PC-9 (cell line): ENCODE measurements at regions of chr7 and their contacts with region 1.

Region 1: DNA sequence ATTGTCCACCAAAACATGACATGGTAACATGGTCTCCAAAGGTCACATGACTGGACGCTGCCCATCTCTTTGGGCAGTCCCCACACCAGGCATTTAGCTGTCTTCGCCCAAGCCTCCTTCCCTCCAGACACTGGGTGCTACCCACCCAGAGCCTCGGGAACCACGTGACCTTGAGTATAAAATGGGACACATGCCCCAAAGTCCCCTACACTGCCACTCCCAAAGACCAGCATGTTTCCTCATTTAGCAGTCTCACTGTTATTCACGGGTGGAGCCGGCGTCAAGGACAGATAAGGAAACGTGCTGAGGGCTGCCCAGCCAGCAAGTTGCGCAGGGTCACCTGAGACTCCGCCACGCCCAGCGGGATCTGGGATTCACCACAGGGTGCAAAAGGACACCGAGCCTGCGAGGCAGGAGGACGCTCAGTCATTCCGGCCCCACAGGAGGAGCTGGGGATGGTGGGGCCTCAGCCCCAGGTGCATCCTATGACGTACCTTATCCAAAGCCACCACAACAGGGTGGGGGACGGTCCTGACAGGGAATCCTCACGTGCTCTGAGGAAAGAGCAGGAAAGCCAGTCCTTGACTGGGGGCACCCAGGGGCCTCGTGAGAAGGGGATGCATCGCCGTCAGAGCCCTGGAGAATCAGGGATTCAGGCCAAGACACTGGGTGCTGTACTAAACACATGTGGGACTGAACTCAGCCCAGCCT is 226.9 kb downstream of the TNS3 start:
- DNase-seq: no peak
- H3K4me3 ChIP-seq: no peak overlapping the region
- H3K27ac ChIP-seq: no peak overlapping the region
- H3K4me1 ChIP-seq: no peaks in the 10 kb centered on the region
- H3K27me3 ChIP-seq: no peaks in the 10 kb centered on the region
- CTCF ChIP-seq: no peak

Region 2: DNA sequence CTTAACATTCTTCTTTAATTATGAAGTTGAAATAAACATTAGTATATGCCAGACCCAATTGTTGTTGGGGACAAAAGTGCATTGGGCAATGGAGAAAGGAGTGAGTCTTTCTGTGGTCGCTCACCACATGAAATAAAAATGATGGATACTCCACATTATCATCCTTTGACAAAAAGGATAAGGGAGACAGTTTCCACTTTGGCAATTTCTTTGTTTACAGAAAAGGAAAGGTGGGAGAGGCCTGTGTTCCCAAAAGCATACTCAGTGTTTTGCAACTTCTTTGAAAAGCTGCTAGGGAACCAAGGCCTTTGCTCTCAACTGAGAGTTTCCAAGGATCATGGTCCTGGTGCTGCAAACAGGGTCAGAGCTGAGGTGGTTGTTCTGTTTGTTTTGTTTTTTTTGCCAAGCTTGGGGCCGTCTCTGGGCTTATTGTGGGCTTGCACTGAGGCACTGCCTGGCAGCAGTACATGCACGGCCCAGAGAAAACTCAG is 115.0 kb before region 1 on chr7:
- CTCF ChIA-PET with region 1: no interaction called
- POLR2A ChIA-PET with region 1: no interaction called
- intact Hi-C with region 1: no loop called
- DNase-seq: no peak
- H3K4me3 ChIP-seq: no peak overlapping the region
- H3K27ac ChIP-seq: no peak overlapping the region
- H3K4me1 ChIP-seq: no peaks in the 10 kb centered on the region
- H3K27me3 ChIP-seq: no peaks in the 10 kb centered on the region
- CTCF ChIP-seq: no peak

Region 3: DNA sequence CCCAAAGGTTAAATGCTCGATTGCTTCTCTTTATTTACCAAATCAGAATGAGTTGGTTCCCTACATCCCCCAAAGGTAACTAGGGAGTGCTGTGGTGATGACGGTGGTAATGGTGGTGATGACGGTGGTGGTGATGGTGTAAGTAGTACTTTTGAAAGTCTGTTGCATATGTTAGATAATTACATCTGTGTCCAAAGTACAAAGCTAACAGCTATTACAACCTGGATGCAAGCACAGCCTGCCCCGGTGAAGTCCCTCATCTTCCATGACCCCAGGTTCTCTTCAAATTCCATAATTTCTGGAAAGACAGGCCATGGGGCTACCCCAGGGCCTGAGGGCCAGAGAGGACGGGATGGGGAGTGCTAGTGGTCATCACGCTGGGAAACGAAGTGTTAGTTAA is 111.9 kb after region 1 on chr7:
- CTCF ChIA-PET with region 1: no interaction called
- POLR2A ChIA-PET with region 1: interaction called, 13 read pairs
- intact Hi-C with region 1: no loop called
- DNase-seq: no peak
- H3K4me3 ChIP-seq: no peak overlapping the region
- H3K27ac ChIP-seq: no peak overlapping the region
- H3K4me1 ChIP-seq: no peaks in the 10 kb centered on the region
- H3K27me3 ChIP-seq: no peaks in the 10 kb centered on the region
- CTCF ChIP-seq: no peak

Region 4: DNA sequence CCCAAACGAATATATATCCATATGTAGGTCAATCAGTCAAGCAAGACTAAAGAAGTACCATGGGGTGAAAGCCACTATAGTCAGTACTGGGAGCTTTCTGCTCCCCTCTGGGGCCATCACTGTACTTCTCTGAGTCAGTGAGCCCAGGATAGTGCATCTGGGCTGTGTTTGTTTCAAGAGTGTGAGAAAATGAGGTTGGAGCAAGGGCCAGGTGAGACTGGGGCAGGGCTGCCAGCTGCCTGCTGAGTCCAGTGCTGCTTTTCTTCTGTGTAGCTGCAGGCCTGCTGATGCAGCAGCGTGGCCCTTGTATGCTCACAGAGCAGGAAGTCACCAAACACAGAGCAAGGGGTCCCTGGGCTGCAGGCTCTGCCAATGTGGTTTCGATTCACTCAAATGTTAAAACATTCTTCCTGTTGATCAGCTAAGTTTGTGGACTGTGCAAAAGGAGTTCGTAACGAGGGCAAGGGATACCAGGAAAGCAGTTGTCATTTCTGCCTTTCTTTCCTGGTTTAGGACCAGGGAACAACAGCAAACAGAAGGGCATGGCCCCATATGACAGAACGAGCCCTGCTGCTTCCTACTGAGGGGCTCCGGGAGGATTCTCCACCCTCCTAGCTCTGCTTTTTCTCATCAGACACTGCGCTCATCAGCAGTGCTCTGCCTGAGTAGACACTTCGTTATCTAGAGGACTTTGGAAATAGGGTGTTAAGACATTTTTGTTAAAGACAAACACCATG is 292.4 kb after region 1 on chr7:
- CTCF ChIA-PET with region 1: no interaction called
- POLR2A ChIA-PET with region 1: no interaction called
- intact Hi-C with region 1: no loop called
- DNase-seq: no peak
- H3K4me3 ChIP-seq: no peak overlapping the region
- H3K27ac ChIP-seq: no peak overlapping the region
- H3K4me1 ChIP-seq: peaks cover 29% of the 10 kb centered on the region
- H3K27me3 ChIP-seq: no peaks in the 10 kb centered on the region
- CTCF ChIP-seq: no peak